ENCODE measurements at regions of chr1 and their contacts with region 1.

Region 1: DNA sequence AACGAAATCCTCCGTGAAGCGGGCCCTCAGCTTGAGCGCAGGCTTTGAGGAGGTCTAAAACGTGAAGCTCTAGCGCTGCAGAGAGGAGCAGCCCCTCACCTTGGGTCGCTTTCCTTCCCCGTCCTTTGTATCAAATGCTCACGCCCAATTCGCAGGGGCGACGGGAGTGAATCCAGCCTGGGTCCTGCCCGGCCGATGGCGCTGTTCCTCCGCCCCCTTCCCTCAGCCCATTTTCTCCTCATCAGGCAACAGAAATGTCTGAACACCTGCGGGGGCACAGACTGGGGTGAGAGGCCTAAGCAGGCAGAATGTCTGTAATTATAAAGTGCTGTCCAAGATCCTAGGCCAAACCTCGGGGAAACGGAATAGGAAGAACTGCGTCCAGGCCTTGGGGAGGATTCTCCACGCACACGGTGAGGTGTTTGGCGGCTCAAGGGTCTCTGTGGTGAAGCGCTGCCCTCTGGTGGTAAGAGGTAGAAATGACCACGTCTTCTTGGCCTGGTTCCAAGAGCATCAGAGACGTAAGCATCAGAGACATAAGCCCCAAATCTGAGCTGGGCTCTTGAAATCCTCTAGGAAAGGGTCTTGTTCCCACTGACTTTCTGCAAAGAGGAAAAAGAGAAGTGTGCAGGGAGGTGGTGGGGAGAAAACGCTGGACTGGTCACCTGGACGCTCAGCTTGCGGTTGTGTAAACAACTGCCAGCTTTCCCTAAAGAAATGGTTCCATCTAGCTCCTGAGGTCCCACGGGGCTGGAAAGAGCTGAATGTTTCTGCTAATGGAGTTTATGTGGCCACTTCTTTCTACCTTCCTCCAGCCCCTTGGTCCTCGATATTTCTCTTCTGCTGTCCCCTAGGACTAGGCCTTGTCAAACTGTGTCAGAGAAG is 92.1 kb upstream of the CD53 start:
- DNase-seq: peak; percentile 86
- ATAC-seq: peak; percentile 71
- H3K4me3 Mint-ChIP-seq: no peak overlapping the region
- H3K27ac Mint-ChIP-seq: no peak overlapping the region
- H3K4me1 Mint-ChIP-seq: peaks cover 42% of the 10 kb centered on the region
- H3K27me3 Mint-ChIP-seq: peaks cover 7% of the 10 kb centered on the region

Region 2: DNA sequence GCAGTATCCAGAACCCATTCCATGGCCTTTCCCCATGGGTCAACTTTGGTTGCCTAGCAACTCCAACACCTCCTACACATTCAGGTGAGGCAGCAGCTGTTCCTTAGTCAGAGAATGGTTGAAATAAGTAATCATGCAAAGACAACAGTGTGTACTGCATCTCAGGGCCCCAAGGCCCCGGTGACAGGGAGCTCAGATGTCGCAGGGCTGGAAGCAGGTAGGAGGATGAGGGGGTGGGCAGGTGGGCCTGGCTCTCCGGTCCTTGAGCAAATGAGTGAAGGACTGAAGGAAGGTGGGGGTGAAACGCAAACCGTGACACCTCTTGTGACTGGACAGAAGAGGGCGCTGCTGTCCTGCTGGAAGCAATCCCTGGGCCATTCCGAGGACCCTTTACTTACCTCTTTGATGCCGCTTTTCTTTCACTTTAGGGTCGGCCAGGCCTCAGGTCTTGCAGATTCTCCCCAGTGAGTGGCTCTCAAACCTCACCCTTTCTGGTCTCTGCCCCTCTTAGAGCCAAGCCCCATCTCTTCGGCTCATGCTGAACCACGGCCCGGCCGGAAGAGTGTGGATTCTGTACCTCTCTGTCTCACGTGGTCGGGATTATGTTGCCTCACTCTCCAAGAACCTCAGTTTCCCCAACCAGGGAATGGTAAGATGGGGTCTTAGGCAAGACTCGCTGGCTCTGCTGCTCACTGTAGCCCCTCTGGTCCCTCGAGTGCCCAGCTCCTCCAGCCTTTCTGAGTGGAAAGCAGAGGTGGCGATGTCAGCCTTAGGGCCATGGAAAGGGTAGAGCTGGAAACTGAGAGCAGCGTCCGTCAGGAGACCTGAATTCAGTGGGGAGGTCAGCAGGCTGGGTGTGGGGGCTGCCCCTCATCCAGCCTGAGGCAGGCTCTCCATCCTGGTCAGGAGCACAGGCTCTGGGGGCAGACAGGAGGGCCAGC is 256.3 kb before region 1 on chr1:
- CTCF ChIA-PET with region 1: interaction called, 38 read pairs
- POLR2A ChIA-PET with region 1: no interaction called
- DNase-seq: peak; percentile 73
- ATAC-seq: peak; percentile 77
- H3K4me3 Mint-ChIP-seq: no peak overlapping the region
- H3K27ac Mint-ChIP-seq: no peak overlapping the region
- H3K4me1 Mint-ChIP-seq: peaks cover 1% of the 10 kb centered on the region
- H3K27me3 Mint-ChIP-seq: peaks cover 38% of the 10 kb centered on the region

Region 3: DNA sequence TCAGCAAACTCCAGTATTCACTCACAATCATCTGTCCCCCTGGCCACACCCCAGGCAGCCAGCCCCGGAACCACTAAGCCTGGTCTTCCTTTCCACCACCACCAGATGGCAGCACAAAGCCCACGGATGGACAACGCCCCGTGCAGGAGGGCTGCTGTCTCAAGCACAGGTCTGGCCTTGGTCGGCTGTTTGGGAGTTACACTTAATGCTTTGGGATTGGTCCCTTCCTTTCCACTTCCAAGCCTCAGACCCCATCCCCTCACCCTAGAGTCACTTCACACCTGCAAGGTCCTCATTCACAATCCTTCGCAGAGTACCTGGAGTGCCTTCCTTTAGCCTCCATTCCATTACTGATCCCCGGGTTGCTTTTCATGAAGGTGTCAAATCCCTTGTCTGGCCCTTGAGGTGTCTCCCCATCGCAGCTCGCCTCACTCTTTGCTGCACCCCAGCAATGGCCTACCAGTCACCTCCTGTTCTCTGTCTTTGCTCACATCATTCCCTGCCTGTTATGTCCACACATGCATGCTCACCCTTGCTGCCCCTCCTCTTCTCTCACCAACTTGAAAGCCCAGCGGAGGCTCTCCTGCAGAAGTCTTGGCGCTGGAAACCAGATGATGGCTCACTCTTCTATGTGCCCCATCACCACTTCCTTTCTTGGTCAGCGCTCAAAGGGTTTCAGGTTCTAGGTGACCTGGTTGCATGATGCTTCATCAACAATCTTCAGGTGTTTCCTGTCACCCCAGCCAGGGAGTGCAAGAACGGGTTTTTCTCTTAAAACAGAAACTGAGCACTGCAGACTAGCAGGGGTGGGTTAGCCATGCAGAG is 149.8 kb before region 1 on chr1:
- CTCF ChIA-PET with region 1: interaction called, 13 read pairs
- POLR2A ChIA-PET with region 1: no interaction called
- DNase-seq: peak; percentile 94
- ATAC-seq: peak; percentile 84
- H3K4me3 Mint-ChIP-seq: no peak overlapping the region
- H3K27ac Mint-ChIP-seq: no peak overlapping the region
- H3K4me1 Mint-ChIP-seq: peaks cover 32% of the 10 kb centered on the region
- H3K27me3 Mint-ChIP-seq: no peaks in the 10 kb centered on the region

Region 4: DNA sequence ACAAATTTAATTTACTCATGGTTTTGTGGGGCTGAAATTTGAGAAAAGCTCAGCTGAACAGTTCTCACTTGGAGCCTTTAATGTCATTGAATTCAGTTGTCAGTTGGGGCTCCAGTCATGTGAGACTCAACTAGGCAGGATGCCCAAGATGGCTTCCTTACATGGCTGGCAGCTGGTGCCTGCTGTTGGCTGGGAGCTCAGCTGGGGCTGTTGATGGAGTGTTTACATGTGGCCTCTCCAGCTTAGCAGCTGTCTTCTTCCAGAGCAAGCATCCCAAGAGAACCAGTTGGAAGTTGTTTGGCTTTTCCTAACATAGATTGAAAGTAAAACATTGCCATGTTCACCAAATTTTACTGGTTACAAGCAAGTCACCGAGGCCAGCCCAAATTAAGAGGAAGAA is 24.3 kb before region 1 on chr1:
- CTCF ChIA-PET with region 1: interaction called, 13 read pairs
- POLR2A ChIA-PET with region 1: no interaction called
- DNase-seq: no peak
- ATAC-seq: no peak
- H3K4me3 Mint-ChIP-seq: no peak overlapping the region
- H3K27ac Mint-ChIP-seq: no peak overlapping the region
- H3K4me1 Mint-ChIP-seq: no peaks in the 10 kb centered on the region
- H3K27me3 Mint-ChIP-seq: peaks cover 32% of the 10 kb centered on the region

Region 5: DNA sequence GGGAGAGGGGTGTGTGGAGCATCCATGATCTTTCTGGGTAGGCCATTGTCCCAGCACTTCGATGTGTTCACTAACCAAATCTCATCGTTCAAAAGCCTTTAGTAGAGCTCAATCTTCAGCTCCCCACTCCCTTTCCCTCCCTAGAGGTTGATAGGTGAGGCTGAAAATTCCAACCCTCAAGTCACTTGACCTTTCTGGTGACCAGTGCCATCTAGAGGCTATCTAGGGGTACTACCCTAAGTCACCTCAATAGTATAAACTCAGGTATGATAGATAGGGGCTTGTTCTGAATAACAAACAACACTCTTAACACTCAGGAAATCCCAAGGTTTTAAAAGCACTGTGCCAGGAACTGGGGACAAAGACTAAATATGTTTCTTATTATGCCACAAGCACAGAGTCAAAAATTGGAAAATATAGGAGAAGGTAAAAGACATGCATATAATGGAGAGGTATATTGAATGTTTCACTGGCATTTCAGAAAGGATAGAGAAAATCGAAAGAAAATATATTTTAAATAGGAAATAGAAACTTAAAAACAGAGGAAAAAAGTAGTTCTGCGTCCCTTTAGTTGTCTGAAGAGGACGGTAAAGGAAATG is 49.2 kb after region 1 on chr1:
- CTCF ChIA-PET with region 1: interaction called, 248 read pairs
- POLR2A ChIA-PET with region 1: no interaction called
- DNase-seq: peak; percentile 59
- ATAC-seq: peak; percentile 88
- H3K4me3 Mint-ChIP-seq: no peak overlapping the region
- H3K27ac Mint-ChIP-seq: no peak overlapping the region
- H3K4me1 Mint-ChIP-seq: peaks cover 8% of the 10 kb centered on the region
- H3K27me3 Mint-ChIP-seq: peaks cover 6% of the 10 kb centered on the region

Region 6: DNA sequence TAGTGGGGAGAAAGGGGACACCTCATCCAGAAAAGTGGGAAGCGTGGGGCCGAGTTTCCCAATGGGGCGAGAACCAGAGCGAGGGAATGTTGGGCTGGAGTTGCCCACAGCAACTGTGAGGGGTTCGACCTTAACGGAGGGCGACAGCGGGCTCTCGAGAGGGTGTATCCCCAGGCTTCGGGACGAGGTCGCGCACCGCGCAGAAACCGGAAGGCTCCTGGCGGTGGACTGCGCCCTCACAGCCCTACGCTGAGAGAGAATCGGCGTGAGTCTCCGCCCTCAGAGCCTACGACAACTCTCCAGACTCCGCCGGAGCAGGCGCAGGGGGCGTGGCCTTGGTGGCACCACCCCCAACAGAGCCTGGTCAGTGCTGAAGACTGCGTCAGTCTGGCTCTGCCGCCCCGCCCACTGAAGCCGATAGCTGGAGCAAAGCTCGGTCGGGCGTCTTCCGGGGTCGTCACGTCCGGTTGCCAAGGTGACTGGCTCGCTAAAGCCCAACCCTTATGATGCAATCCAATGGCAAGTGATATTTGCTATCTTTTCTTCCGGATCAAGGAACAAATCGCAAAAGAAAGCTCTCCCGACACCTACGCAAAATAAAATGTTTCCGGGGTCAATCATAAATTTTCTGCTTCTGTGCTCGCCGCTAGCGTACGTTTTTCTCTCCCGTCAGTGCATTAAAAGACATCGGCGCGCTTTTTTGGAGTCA is 183.0 kb after region 1 on chr1 and contains the start of gene LRIF1:
- CTCF ChIA-PET with region 1: interaction called, 10 read pairs
- POLR2A ChIA-PET with region 1: interaction called, 3 read pairs
- DNase-seq: peak; percentile 100
- ATAC-seq: peak; percentile 99
- H3K4me3 Mint-ChIP-seq: peak within 1 kb of the TSS; percentile 78
- H3K27ac Mint-ChIP-seq: peak within 1 kb of the TSS; percentile 99
- H3K4me1 Mint-ChIP-seq: peaks cover 39% of the 10 kb centered on the region
- H3K27me3 Mint-ChIP-seq: peaks cover 8% of the 10 kb centered on the region
- total RNA-seq, gene LRIF1: 19.6 to 20.9 TPM

Region 7: GRCh38 chr1:111030590-111030989 is 249.7 kb after region 1 on chr1:
- CTCF ChIA-PET with region 1: interaction called, 22 read pairs
- POLR2A ChIA-PET with region 1: no interaction called
- DNase-seq: peak; percentile 76
- ATAC-seq: peak; percentile 70
- H3K4me3 Mint-ChIP-seq: no peak overlapping the region
- H3K27ac Mint-ChIP-seq: no peak overlapping the region
- H3K4me1 Mint-ChIP-seq: no peaks in the 10 kb centered on the region
- H3K27me3 Mint-ChIP-seq: peaks cover 24% of the 10 kb centered on the region

Measured in activated CD8-positive, alpha-beta T cell treated with anti-CD3 and anti-CD28 coated beads, Interleukin-2, amount 10 ng/mL, durations not matched to agents 7 days and 5 days (primary cell).